Colonic mucosa (tissue), 4 donors: ENCODE measurements at regions of chr2 and their contacts with region 1.

Region 1: GRCh38 chr2:31523871-31524492 is 56.8 kb downstream of the SRD5A2 start:
- DNase-seq: peak; percentile 74
- H3K4me3 ChIP-seq: no peak overlapping the region
- H3K27ac ChIP-seq: no peak overlapping the region
- H3K4me1 ChIP-seq: no peaks in the 10 kb centered on the region
- H3K27me3 ChIP-seq: no peaks in the 10 kb centered on the region
- CTCF ChIP-seq: peak; percentile 76

Region 2: GRCh38 chr2:31413862-31414550 is 110.0 kb before region 1 on chr2:
- intact Hi-C with region 1: loop called (anchors 5 kb)
- DNase-seq: no peak
- H3K4me3 ChIP-seq: peak overlapping the region; percentile 12
- H3K27ac ChIP-seq: peak overlapping the region; percentile 71
- H3K4me1 ChIP-seq: no peaks in the 10 kb centered on the region
- H3K27me3 ChIP-seq: no peaks in the 10 kb centered on the region
- CTCF ChIP-seq: peak; percentile 16

Region 3: DNA sequence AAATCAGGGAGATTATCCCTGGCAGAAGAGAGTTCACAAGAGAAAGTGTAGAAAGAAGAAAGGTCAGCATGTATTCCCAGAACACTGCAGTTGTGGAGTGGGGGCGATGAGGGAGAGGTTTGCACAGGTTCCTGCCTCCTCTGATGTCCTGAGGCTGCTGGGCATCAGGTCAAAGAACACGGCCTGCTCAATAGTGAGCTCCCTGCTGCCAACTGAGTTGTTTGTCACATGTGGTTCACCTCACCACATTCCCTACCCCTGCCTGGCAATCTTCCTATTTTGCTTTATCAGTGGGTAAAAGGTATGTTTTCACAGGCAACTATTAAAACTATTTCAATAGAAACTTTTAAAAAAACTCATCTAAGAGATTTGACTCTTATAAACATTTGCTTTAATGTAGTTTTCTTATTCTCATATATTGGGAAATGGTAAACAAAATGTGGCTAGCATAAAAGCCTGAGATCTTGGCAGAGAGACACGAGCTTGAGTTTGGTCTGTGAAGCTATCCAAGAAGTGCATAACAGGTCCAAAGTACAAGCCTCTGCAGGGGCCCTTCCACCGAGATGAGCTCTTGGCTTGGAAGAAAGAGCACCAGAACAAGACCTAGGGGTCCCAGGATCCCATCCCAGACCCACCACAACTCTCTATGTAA is 180.7 kb after region 1 on chr2:
- intact Hi-C with region 1: no loop called
- DNase-seq: no peak
- H3K4me3 ChIP-seq: no peak overlapping the region
- H3K27ac ChIP-seq: no peak overlapping the region
- H3K4me1 ChIP-seq: no peaks in the 10 kb centered on the region
- H3K27me3 ChIP-seq: no peaks in the 10 kb centered on the region
- CTCF ChIP-seq: no peak